Activated CD4-positive, alpha-beta T cell treated with anti-CD3 and anti-CD28 coated beads, Interleukin-2, amount 10 ng/mL, durations not matched to agents 24 days and 14 days (primary cell): ENCODE measurements at regions of chr16 and their contacts with region 1.

Region 1: GRCh38 chr16:69132424-69133252 is at the starts of genes CHTF8 and UTP4:
- DNase-seq: peak; percentile 97
- H3K4me3 Mint-ChIP-seq: peak within 1 kb of the TSS; percentile 90
- H3K27ac Mint-ChIP-seq: peak within 1 kb of the TSS; percentile 93
- H3K4me1 Mint-ChIP-seq: peaks cover 50% of the 10 kb centered on the region
- H3K27me3 Mint-ChIP-seq: no peaks in the 10 kb centered on the region
- total RNA-seq, gene CHTF8: 124 and 138 TPM in 2 replicates
- total RNA-seq, gene UTP4: 126 and 131 TPM in 2 replicates

Region 2: GRCh38 chr16:69089091-69089910 is 43.3 kb before region 1 on chr16:
- intact Hi-C with region 1: no loop called
- DNase-seq: no peak
- H3K4me3 Mint-ChIP-seq: no peak overlapping the region
- H3K27ac Mint-ChIP-seq: no peak overlapping the region
- H3K4me1 Mint-ChIP-seq: peaks cover 14% of the 10 kb centered on the region
- H3K27me3 Mint-ChIP-seq: no peaks in the 10 kb centered on the region

Region 3: GRCh38 chr16:69112285-69113129 is 20.1 kb before region 1 on chr16:
- intact Hi-C with region 1: no loop called
- DNase-seq: peak; percentile 84
- H3K4me3 Mint-ChIP-seq: no peak overlapping the region
- H3K27ac Mint-ChIP-seq: no peak overlapping the region
- H3K4me1 Mint-ChIP-seq: peaks cover 2% of the 10 kb centered on the region
- H3K27me3 Mint-ChIP-seq: peaks cover 13% of the 10 kb centered on the region

Region 4: GRCh38 chr16:69186642-69187445 is 54.2 kb after region 1 on chr16 and contains the start of gene SNTB2:
- intact Hi-C with region 1: loop called (anchors 5 kb)
- DNase-seq: peak; percentile 97
- H3K4me3 Mint-ChIP-seq: peak within 1 kb of the TSS; percentile 96
- H3K27ac Mint-ChIP-seq: peak within 1 kb of the TSS; percentile 98
- H3K4me1 Mint-ChIP-seq: peaks cover 47% of the 10 kb centered on the region
- H3K27me3 Mint-ChIP-seq: no peaks in the 10 kb centered on the region
- total RNA-seq, gene SNTB2: 21.4 and 23.3 TPM in 2 replicates

Region 5: GRCh38 chr16:69330286-69331109 is 197.9 kb after region 1 on chr16 and contains the start of gene PDF:
- intact Hi-C with region 1: loop called (anchors 1 kb)
- DNase-seq: peak; percentile 97
- H3K4me3 Mint-ChIP-seq: peak within 1 kb of the TSS; percentile 90
- H3K27ac Mint-ChIP-seq: peak within 1 kb of the TSS; percentile 89
- H3K4me1 Mint-ChIP-seq: peaks cover 32% of the 10 kb centered on the region
- H3K27me3 Mint-ChIP-seq: no peaks in the 10 kb centered on the region
- total RNA-seq, gene PDF: 18.2 and 21.9 TPM in 2 replicates